Heart left ventricle (tissue), 16 donors: ENCODE measurements at regions of chr13 and their contacts with region 1.

Region 1: GRCh38 chr13:31545616-31546015 is 193.7 kb upstream of the RXFP2 start:
- DNase-seq: no peak
- ATAC-seq: no peak
- H3K4me3 ChIP-seq: peak overlapping the region in 1 of 12 donors; percentile 23
- H3K27ac ChIP-seq: no peak overlapping the region
- H3K4me1 ChIP-seq: peaks cover 0 to 8% (median 0%) of the 10 kb centered on the region in 12 donors
- H3K27me3 ChIP-seq: no peaks in the 10 kb centered on the region
- CTCF ChIP-seq: no peak
- POLR2A ChIP-seq: no peak

Region 2: GRCh38 chr13:31221057-31221456 is 324.6 kb before region 1 on chr13:
- intact Hi-C with region 1: no loop called
- DNase-seq: peak in 1 of 5 donors; percentile 40
- ATAC-seq: peak in 3 of 4 donors; percentile 46 to 59 (median 47)
- H3K4me3 ChIP-seq: no peak overlapping the region
- H3K27ac ChIP-seq: peak overlapping the region in 8 of 12 donors; percentile 1 to 77 (median 48)
- H3K4me1 ChIP-seq: peaks cover 0 to 57% (median 12%) of the 10 kb centered on the region in 12 donors
- H3K27me3 ChIP-seq: no peaks in the 10 kb centered on the region
- CTCF ChIP-seq: no peak
- POLR2A ChIP-seq: no peak

Region 3: DNA sequence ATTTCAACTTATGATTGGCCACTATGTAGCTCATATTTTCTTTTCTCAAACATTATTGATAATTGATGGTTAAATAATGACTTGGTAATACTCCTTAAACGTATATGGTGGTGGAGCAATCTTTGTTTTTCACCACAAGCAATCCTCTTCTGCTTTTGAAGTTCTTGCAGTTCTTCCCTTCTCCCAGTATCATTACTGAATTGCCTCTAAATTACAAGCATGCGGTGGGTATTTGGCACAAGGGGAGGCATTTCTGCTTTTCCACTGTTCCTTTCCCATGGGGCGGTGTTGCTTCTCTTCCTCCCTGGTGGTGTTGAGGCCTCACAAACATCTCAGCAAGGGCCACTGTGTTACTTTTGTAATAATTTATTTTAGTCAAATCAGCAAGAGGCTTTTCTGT is 40.7 kb before region 1 on chr13:
- intact Hi-C with region 1: no loop called
- DNase-seq: no peak
- ATAC-seq: no peak
- H3K4me3 ChIP-seq: no peak overlapping the region
- H3K27ac ChIP-seq: no peak overlapping the region
- H3K4me1 ChIP-seq: no peaks in the 10 kb centered on the region
- H3K27me3 ChIP-seq: no peaks in the 10 kb centered on the region
- CTCF ChIP-seq: no peak
- POLR2A ChIP-seq: no peak

Region 4: DNA sequence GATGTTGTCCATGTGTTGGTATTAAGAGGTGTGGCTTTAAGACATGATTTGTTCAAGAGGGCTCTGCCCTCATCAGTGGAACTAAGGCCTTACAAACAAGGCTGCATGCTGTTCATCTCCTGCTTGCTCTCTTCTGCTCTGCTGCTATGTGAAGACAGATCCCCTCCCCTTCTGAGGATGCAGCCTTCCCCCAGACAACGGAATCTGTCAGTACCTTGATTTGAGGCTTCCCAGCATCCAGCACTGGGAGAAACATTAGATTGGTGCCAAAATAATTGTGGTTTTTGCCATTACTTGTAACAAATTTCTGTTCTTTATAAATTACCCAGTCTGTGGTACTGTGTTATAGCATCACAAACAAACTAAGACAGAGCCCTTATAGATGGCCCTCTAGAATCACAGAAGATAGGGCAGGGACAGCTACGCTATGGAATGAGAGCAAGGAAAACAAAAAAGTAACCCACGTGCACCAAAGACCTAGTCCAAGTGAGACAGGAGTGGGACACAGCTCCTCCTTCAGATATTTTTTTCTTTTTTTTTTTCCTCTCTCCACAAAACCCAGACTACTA is 42.2 kb after region 1 on chr13:
- intact Hi-C with region 1: no loop called
- DNase-seq: no peak
- ATAC-seq: no peak
- H3K4me3 ChIP-seq: no peak overlapping the region
- H3K27ac ChIP-seq: no peak overlapping the region
- H3K4me1 ChIP-seq: peaks cover 0 to 8% (median 0%) of the 10 kb centered on the region in 12 donors
- H3K27me3 ChIP-seq: peaks cover 0 to 6% (median 0%) of the 10 kb centered on the region in 9 donors
- CTCF ChIP-seq: no peak
- POLR2A ChIP-seq: no peak

Region 5: DNA sequence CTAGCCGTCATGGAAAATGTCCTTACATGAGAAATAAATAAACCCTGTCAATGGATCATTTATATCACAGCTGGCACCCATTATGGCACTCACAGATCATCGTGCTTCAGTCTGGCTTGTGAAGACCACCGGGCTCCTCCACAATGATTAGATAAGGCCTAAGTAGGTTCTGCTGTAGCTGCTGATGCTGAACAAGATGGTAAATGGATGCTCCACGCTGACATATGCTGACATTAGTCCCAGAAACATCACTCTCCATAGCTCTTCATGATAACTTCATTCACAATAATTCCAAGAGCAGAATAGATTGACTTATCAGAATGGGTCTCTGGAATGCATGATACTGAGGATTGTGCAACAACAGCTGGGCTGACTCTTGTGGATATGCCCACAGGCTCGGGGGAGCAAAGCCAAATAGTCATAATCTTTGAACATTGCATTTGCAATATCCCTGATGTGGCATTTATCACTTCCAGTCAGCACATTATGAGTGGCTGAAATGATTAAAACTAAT is 129.9 kb after region 1 on chr13:
- intact Hi-C with region 1: loop called in 1 of 10 experiments (anchors 10 kb)
- DNase-seq: no peak
- ATAC-seq: no peak
- H3K4me3 ChIP-seq: no peak overlapping the region
- H3K27ac ChIP-seq: no peak overlapping the region
- H3K4me1 ChIP-seq: peaks cover 0 to 3% (median 0%) of the 10 kb centered on the region in 12 donors
- H3K27me3 ChIP-seq: peaks cover 0 to 4% (median 0%) of the 10 kb centered on the region in 9 donors
- CTCF ChIP-seq: no peak
- POLR2A ChIP-seq: no peak

Region 6: DNA sequence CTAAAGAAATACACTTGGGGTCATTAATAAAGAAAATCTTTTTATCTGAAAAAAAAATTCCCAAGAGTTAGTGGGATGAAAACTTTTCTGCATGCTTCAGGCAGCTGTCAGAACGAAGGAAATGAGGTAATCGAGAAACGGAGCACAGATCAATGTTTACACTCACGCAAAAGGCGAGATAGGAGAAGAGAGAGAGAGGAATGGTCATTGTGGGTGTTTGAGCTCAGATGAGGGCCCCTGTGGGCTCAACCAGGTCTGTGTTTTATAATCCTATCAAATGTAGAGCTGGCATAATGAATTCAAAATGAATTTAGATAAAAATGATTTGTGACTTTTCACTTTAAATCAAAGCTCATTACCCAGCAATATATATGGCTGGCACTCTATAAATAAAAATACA is 187.4 kb after region 1 on chr13:
- intact Hi-C with region 1: loop called in 1 of 10 experiments (anchors 10 kb)
- DNase-seq: no peak
- ATAC-seq: no peak
- H3K4me3 ChIP-seq: peak overlapping the region in 6 of 12 donors; percentile 6 to 39 (median 22)
- H3K27ac ChIP-seq: no peak overlapping the region
- H3K4me1 ChIP-seq: peaks cover 0 to 10% (median 0%) of the 10 kb centered on the region in 12 donors
- H3K27me3 ChIP-seq: no peaks in the 10 kb centered on the region
- CTCF ChIP-seq: no peak
- POLR2A ChIP-seq: no peak

Region 7: DNA sequence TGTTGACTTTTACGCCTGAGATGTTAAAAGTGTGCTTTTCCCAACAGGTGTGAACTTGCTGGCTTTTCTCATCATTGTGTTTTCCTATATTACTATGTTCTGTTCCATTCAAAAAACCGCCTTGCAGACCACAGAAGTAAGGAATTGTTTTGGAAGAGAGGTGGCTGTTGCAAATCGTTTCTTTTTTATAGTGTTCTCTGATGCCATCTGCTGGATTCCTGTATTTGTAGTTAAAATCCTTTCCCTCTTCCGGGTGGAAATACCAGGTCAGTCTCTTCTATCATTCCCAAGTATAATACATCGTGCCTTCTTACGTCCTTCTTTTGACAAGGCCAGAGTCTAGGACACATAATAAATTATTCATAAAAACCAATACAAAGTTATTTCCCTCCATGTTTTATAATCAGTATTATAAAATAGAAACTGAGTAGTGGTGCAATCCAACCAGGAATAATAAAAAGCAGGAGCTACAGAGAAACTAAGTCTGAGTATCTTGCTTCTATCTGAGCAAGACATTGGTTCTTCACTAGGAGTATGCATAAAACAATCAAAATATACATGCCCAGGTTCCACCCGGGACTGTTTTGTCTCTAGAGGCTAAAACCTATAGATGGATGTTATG is 251.6 kb after region 1 on chr13:
- intact Hi-C with region 1: loop called in 1 of 10 experiments (anchors 10 kb)
- DNase-seq: no peak
- ATAC-seq: peak in 1 of 4 donors; percentile 61
- H3K4me3 ChIP-seq: no peak overlapping the region
- H3K27ac ChIP-seq: no peak overlapping the region
- H3K4me1 ChIP-seq: peaks cover 0 to 8% (median 0%) of the 10 kb centered on the region in 12 donors
- H3K27me3 ChIP-seq: no peaks in the 10 kb centered on the region
- CTCF ChIP-seq: peak in 10 of 12 donors; percentile 7 to 59 (median 42)
- POLR2A ChIP-seq: no peak

Region 8: GRCh38 chr13:31951215-31951678 is 405.6 kb after region 1 on chr13:
- intact Hi-C with region 1: no loop called
- DNase-seq: peak; percentile 49 to 87 (median 69)
- ATAC-seq: peak; percentile 49 to 94 (median 88)
- H3K4me3 ChIP-seq: no peak overlapping the region
- H3K27ac ChIP-seq: peak overlapping the region in 8 of 12 donors; percentile 1 to 64 (median 33)
- H3K4me1 ChIP-seq: peaks cover 0 to 36% (median 9%) of the 10 kb centered on the region in 12 donors
- H3K27me3 ChIP-seq: no peaks in the 10 kb centered on the region
- CTCF ChIP-seq: no peak
- POLR2A ChIP-seq: no peak